Activated T-helper 1 cell treated with anti-CD3 and anti-CD28 coated beads, Interleukin-12 subunit alpha, Interleukin-12 subunit beta, Interleukin-2, Interleukin-4 antibody, amounts not matched to agents 30 ng/mL and 10 ng/mL and 1 ng/mL, durations not matched to agents 14 hours and 24 hours and 36 hours (primary cell): ENCODE measurements at regions of chr3 and their contacts with region 1.

Region 1: DNA sequence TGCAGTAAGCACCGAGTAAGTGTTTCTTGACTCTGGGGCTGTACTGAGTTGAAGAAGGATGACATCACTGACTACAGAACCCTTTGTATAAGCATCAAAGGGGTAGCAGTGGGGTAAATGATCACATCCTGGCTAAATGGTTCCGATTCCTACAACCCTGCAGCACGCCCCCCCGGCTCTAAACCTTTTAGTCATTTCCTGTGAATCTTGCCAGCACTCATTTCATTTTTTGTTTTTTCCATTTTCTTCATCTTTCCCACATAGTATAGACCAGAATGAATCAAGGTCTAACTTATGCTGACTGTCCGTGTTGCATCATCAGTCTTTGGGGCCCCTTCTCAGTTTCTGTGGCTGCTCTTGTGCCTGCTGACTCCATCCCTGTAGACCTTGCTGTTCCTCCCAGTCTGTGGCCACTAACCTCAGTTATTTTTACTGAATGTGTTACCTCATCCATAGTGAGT is 383.1 kb upstream of the TPRG1 start:
- DNase-seq: peak; percentile 49
- H3K4me3 Mint-ChIP-seq: no peak overlapping the region
- H3K27ac Mint-ChIP-seq: no peak overlapping the region
- H3K4me1 Mint-ChIP-seq: peaks cover 6% of the 10 kb centered on the region
- H3K27me3 Mint-ChIP-seq: peaks cover 8% of the 10 kb centered on the region

Region 2: DNA sequence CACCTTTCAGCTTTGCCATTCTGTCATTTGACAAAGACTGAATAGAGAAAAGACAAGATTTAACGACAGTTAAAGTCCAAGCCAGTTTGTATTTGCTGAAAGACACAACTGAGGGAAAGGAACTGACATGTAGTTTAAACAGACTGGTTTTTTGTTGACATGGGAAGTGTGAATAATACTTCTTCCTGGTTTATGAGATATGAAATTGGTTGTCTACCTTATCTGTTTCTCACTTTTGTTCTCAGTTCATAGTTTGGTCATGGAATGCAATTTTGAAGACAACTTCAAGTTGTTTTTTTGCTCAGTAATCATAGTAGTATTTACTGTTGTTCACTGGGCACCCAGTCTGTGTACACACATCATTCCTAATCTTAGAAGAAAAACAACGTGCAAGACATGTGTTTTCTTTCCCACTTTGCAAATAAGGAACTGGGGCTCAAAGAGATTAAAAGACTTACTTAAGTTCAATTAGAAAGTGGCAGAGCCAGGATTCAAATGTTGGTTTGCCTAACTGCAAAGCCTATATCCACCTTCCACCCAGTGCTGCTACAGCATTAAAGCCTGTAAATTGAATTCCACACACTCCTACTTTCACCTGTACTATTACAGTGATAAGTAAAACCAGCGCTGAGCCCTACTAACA is 531.1 kb before region 1 on chr3:
- intact Hi-C with region 1: loop called (anchors 2 kb)
- DNase-seq: no peak
- H3K4me3 Mint-ChIP-seq: no peak overlapping the region
- H3K27ac Mint-ChIP-seq: peak overlapping the region; percentile 63
- H3K4me1 Mint-ChIP-seq: peaks cover 62% of the 10 kb centered on the region
- H3K27me3 Mint-ChIP-seq: peaks cover 2% of the 10 kb centered on the region

Region 3: GRCh38 chr3:188320757-188321156 is 467.9 kb before region 1 on chr3:
- intact Hi-C with region 1: loop called (anchors 1 kb)
- DNase-seq: no peak
- H3K4me3 Mint-ChIP-seq: no peak overlapping the region
- H3K27ac Mint-ChIP-seq: no peak overlapping the region
- H3K4me1 Mint-ChIP-seq: peaks cover 49% of the 10 kb centered on the region
- H3K27me3 Mint-ChIP-seq: peaks cover 1% of the 10 kb centered on the region

Region 4: DNA sequence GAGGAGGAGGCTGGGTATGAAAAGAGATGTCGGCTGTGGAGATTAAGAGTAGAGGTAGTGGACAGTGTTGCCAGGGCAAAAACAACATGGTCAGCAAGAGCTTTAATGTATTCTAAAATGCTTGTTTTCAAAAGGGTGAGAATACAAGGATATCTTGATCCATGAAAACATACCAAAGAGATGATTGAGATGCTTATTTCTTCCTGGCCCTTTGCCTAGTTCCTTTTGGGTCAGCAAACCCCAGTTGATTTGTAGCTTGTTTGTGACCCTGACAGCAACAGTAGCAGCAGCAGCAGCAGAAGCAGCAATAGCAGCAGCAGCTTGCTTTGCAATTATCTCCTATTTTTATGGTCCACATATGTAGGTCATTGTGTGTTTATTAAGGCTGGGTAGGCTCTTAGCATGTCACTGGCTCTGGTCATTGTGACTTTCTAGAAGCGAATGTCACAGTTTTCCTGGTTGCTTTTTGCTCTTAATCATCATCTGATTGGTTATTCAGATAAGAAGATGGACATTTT is 297.3 kb before region 1 on chr3:
- intact Hi-C with region 1: no loop called
- DNase-seq: no peak
- H3K4me3 Mint-ChIP-seq: no peak overlapping the region
- H3K27ac Mint-ChIP-seq: no peak overlapping the region
- H3K4me1 Mint-ChIP-seq: peaks cover 10% of the 10 kb centered on the region
- H3K27me3 Mint-ChIP-seq: no peaks in the 10 kb centered on the region

Region 5: DNA sequence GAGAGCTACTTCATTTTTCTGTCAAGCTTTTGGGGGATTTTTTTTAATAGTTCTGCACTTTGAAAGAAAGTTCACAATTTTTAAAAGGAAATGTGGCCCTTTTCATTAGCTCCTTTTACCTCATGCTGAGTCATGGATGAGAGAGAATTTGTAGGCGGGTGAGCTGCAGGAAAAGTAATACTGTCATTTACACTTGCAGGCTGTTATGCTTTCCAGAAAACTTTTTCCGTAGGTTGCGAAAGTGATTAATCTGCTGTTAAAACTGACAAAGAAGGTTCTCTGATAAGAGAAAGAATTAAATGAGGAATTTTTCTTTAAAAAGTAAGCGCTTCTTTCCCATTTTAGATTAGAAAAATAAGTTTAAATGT is 204.5 kb before region 1 on chr3:
- intact Hi-C with region 1: loop called (anchors 2 kb)
- DNase-seq: no peak
- H3K4me3 Mint-ChIP-seq: no peak overlapping the region
- H3K27ac Mint-ChIP-seq: no peak overlapping the region
- H3K4me1 Mint-ChIP-seq: no peaks in the 10 kb centered on the region
- H3K27me3 Mint-ChIP-seq: no peaks in the 10 kb centered on the region

Region 6: DNA sequence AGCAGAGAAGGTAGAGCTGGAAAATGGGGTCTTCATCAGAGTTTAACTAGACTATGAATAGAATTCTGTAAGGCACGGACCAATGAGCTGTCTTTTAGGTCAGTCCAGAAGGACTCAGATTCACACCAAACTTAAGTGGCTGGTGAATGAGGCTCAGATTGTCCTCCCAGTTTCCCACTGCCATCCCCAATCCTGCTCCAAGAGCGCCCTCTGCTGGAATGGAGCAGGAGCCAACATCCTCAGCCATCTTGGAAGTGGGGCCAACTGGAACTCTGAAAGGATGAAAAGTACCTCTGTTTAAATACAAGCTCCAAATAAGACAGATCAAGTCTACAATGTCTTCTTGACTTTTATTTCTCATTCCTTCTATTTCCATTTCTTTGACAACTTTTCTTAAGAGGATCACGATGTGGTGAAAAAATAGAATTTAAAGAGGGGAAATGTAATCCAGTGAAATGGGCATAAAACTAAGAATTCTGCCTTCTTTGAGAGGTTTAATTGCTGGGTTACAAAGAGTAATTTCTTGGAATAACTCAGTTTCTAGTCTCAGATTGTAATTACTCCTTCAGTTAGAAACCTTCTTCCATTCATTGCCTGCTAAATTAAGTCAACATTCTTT is 166.0 kb after region 1 on chr3:
- intact Hi-C with region 1: loop called (anchors 1 kb)
- DNase-seq: peak; percentile 68
- H3K4me3 Mint-ChIP-seq: no peak overlapping the region
- H3K27ac Mint-ChIP-seq: no peak overlapping the region
- H3K4me1 Mint-ChIP-seq: peaks cover 46% of the 10 kb centered on the region
- H3K27me3 Mint-ChIP-seq: no peaks in the 10 kb centered on the region